GM12878 (cell line): ENCODE measurements at regions of chr11 and their contacts with region 1.

Region 1: GRCh38 chr11:65163684-65164083 is 6.3 kb upstream of the SPDYC start:
- DNase-seq: no peak
- ATAC-seq: no peak
- H3K4me3 ChIP-seq: no peak overlapping the region
- H3K27ac ChIP-seq: no peak overlapping the region
- H3K4me1 ChIP-seq: peaks cover 9% of the 10 kb centered on the region
- H3K27me3 ChIP-seq: no peaks in the 10 kb centered on the region
- CTCF ChIP-seq: no peak
- EP300 ChIP-seq: no peak
- POLR2A ChIP-seq: no peak
- RAD21 ChIP-seq: no peak

Region 2: DNA sequence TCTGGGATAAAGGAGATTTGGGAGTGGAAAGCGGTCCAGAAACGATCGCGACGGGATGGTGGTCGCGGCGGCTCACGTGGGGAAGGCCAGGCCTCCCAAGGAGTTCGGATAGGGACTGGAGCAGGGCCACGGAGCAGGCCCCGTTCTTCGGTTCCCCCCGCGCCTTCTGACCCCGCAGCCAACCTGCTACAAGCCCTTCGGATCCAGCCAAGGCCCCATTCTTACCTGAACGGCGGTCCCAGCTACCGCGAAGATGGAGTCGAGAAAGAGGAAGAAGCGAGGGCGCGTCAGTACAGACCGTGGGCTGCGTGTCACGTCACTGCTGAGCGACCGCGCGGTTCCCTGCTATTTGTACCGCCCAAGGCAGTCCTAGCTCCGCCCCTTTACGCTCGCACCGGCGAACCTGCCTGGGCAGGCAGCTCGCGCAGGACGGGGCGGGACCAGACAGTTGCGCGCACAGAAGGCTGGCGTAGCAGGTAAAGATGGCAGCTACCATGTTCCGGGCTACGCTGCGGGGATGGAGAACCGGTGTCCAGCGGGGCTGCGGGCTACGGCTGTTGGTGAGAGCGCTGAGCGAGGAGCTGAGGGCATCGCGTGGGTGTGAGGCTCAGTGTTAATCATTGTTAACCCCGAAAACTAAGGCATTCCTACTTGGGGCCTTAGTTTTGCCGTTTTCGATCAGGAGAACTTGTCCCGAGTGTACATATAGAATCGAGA is 41.7 kb before region 1 on chr11 and contains the starts of genes FAU and MRPL49:
- CTCF ChIA-PET with region 1: no interaction called
- POLR2A ChIA-PET with region 1: no interaction called
- RAD21 ChIA-PET with region 1: no interaction called
- SMC1A ChIA-PET with region 1: no interaction called
- in situ Hi-C with region 1: no loop called
- intact Hi-C with region 1: no loop called
- DNase-seq: peak; percentile 95
- ATAC-seq: peak; percentile 90
- H3K4me3 ChIP-seq: peak within 1 kb of the TSS; percentile 85
- H3K27ac ChIP-seq: peak within 1 kb of the TSS; percentile 80
- H3K4me1 ChIP-seq: peaks cover 17% of the 10 kb centered on the region
- H3K27me3 ChIP-seq: no peaks in the 10 kb centered on the region
- CTCF ChIP-seq: no peak
- EP300 ChIP-seq: no peak
- POLR2A ChIP-seq: peak; percentile 95
- RAD21 ChIP-seq: no peak
- polyA plus RNA-seq, gene FAU: 332 to 611 TPM
- polyA plus RNA-seq, gene MRPL49: 42.0 to 49.8 TPM

Region 3: GRCh38 chr11:65141896-65142494 is 21.7 kb before region 1 on chr11:
- CTCF ChIA-PET with region 1: no interaction called
- POLR2A ChIA-PET with region 1: no interaction called
- RAD21 ChIA-PET with region 1: no interaction called
- SMC1A ChIA-PET with region 1: interaction called, 3 read pairs
- in situ Hi-C with region 1: no loop called
- intact Hi-C with region 1: loop called (anchors 2 kb)
- DNase-seq: no peak
- ATAC-seq: no peak
- H3K4me3 ChIP-seq: no peak overlapping the region
- H3K27ac ChIP-seq: no peak overlapping the region
- H3K4me1 ChIP-seq: no peaks in the 10 kb centered on the region
- H3K27me3 ChIP-seq: no peaks in the 10 kb centered on the region; a peak in 2 of 4 replicates
- CTCF ChIP-seq: no peak
- EP300 ChIP-seq: no peak
- POLR2A ChIP-seq: no peak
- RAD21 ChIP-seq: no peak

Region 4: GRCh38 chr11:65290448-65291165 is 126.9 kb after region 1 on chr11:
- CTCF ChIA-PET with region 1: no interaction called
- POLR2A ChIA-PET with region 1: no interaction called
- RAD21 ChIA-PET with region 1: no interaction called
- SMC1A ChIA-PET with region 1: no interaction called
- in situ Hi-C with region 1: no loop called
- intact Hi-C with region 1: no loop called
- DNase-seq: peak; percentile 69
- ATAC-seq: peak; percentile 95
- H3K4me3 ChIP-seq: no peak overlapping the region
- H3K27ac ChIP-seq: peak overlapping the region; percentile 87
- H3K4me1 ChIP-seq: peaks cover 16% of the 10 kb centered on the region
- H3K27me3 ChIP-seq: no peaks in the 10 kb centered on the region
- CTCF ChIP-seq: no peak
- EP300 ChIP-seq: no peak
- POLR2A ChIP-seq: no peak
- RAD21 ChIP-seq: no peak